Mammary epithelial cell (primary cell): ENCODE measurements at regions of chr2 and their contacts with region 1.

Region 1: GRCh38 chr2:228102949-228103348 is 78.5 kb downstream of the SPHKAP start:
- DNase-seq: peak; percentile 52
- H3K4me3 ChIP-seq: no peak overlapping the region
- H3K27ac ChIP-seq: no peak overlapping the region
- H3K4me1 ChIP-seq: no peaks in the 10 kb centered on the region
- H3K27me3 ChIP-seq: no peaks in the 10 kb centered on the region
- CTCF ChIP-seq: no peak

Region 2: GRCh38 chr2:228023619-228024018 is 79.3 kb before region 1 on chr2:
- CTCF ChIA-PET with region 1: no interaction called
- dilution Hi-C with region 1: loop called (anchors 5 kb)
- in situ Hi-C with region 1: no loop called
- intact Hi-C with region 1: no loop called
- DNase-seq: peak; percentile 7
- H3K4me3 ChIP-seq: no peak overlapping the region
- H3K27ac ChIP-seq: no peak overlapping the region
- H3K4me1 ChIP-seq: no peaks in the 10 kb centered on the region
- H3K27me3 ChIP-seq: no peaks in the 10 kb centered on the region
- CTCF ChIP-seq: no peak

Region 3: GRCh38 chr2:229133155-229133772 is 1030.3 kb after region 1 on chr2:
- CTCF ChIA-PET with region 1: no interaction called
- dilution Hi-C with region 1: no loop called
- in situ Hi-C with region 1: no loop called
- intact Hi-C with region 1: no loop called
- DNase-seq: peak; percentile 40
- H3K4me3 ChIP-seq: no peak overlapping the region
- H3K27ac ChIP-seq: no peak overlapping the region
- H3K4me1 ChIP-seq: no peaks in the 10 kb centered on the region
- H3K27me3 ChIP-seq: no peaks in the 10 kb centered on the region
- CTCF ChIP-seq: peak; percentile 46 to 77